Posterior cingulate gyrus (tissue), 11 donors: ENCODE measurements at regions of chr6 and their contacts with region 1.

Region 1: GRCh38 chr6:131182991-131183425 is 47.7 kb downstream of the AKAP7 start:
- DNase-seq: no peak

Region 2: GRCh38 chr6:131107151-131107550 is 75.9 kb before region 1 on chr6:
- intact Hi-C with region 1: no loop called
- DNase-seq: no peak

Region 3: GRCh38 chr6:131117878-131118277 is 65.1 kb before region 1 on chr6:
- intact Hi-C with region 1: no loop called
- DNase-seq: no peak

Region 4: GRCh38 chr6:131532580-131533039 is 349.6 kb after region 1 on chr6:
- intact Hi-C with region 1: loop called (anchors 1 kb)
- DNase-seq: no peak

Region 5: DNA sequence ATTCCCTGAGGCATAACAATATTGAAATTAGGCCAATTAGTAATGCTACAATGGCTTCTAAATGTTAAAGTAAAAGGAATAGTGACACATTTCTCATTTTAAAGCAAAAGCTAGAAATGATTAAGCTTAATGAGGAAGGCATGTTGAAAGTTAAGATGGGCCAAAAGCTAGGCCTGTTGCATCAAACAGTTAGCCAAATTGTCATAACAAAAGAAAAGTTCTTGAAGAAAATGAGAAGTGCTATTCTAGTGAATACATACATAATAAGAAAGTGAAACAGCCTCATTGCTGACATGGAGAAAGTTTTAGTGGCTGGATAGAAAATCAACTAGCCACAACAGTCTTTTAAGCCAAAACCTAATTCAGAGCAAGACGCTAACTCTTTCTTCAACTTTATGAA is 505.3 kb after region 1 on chr6:
- intact Hi-C with region 1: no loop called
- DNase-seq: no peak